ENCODE measurements at regions of chr7 and their contacts with region 1.

Region 1: GRCh38 chr7:48299580-48300169 is 128.4 kb downstream of the ABCA13 start:
- DNase-seq: peak; percentile 81
- H3K4me3 Mint-ChIP-seq: no peak overlapping the region
- H3K27ac Mint-ChIP-seq: no peak overlapping the region
- H3K4me1 Mint-ChIP-seq: peaks cover 9% of the 10 kb centered on the region
- H3K27me3 Mint-ChIP-seq: no peaks in the 10 kb centered on the region
- CTCF ChIP-seq: peak; percentile 78

Region 2: DNA sequence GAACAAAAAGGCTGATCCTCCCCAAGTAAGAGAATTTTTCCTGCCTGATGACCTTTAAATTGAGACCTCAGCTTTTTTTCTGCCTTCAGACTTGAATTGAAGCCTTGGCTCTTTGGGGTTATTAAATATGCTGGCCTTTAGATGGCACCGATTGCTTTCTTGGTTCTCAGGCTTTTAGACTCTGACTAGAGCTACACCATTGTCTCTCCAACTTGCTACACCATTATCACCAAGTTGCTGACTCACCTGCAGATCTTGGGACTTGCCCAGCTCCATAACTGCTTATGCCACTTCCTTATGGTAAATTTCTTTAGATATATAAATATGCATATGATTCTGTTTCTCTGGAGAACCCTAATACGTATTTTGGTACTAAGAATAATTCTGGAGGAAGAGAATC is 131.5 kb before region 1 on chr7:
- CTCF ChIA-PET with region 1: interaction called, 4 read pairs
- intact Hi-C with region 1: loop called (anchors 1 kb)
- DNase-seq: peak; percentile 56
- H3K4me3 Mint-ChIP-seq: no peak overlapping the region
- H3K27ac Mint-ChIP-seq: peak overlapping the region; percentile 69
- H3K4me1 Mint-ChIP-seq: peaks cover 4% of the 10 kb centered on the region
- H3K27me3 Mint-ChIP-seq: no peaks in the 10 kb centered on the region
- CTCF ChIP-seq: no peak

Region 3: DNA sequence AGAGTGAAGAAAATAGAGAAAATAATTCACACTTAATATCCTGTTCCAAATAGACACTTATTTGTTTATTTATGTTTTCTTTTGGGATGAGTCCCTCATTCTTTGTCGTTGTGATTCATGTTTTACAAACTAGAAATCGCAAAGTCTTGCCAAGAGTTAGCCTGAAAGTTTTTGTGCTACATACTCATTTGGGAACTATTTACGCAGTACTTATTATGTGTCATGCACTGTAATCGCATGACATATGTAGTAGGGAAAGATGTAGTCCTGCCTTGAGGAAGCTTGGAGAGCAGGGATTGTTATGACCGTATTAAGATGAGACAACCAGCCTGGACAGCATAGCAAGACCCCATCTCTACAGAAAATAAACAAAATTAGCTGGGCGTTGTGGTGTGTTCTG is 60.9 kb after region 1 on chr7:
- CTCF ChIA-PET with region 1: no interaction called
- intact Hi-C with region 1: no loop called
- DNase-seq: no peak
- H3K4me3 Mint-ChIP-seq: no peak overlapping the region
- H3K27ac Mint-ChIP-seq: no peak overlapping the region
- H3K4me1 Mint-ChIP-seq: no peaks in the 10 kb centered on the region
- H3K27me3 Mint-ChIP-seq: no peaks in the 10 kb centered on the region
- CTCF ChIP-seq: no peak

Region 4: GRCh38 chr7:48875045-48875916 is 575.6 kb after region 1 on chr7:
- CTCF ChIA-PET with region 1: no interaction called
- intact Hi-C with region 1: loop called (anchors 1 kb)
- DNase-seq: peak; percentile 71
- H3K4me3 Mint-ChIP-seq: no peak overlapping the region
- H3K27ac Mint-ChIP-seq: no peak overlapping the region
- H3K4me1 Mint-ChIP-seq: peaks cover 8% of the 10 kb centered on the region
- H3K27me3 Mint-ChIP-seq: no peaks in the 10 kb centered on the region
- CTCF ChIP-seq: peak; percentile 58

Region 5: GRCh38 chr7:49166441-49166840 is 866.8 kb after region 1 on chr7:
- CTCF ChIA-PET with region 1: no interaction called
- intact Hi-C with region 1: loop called (anchors 1 kb)
- DNase-seq: no peak
- H3K4me3 Mint-ChIP-seq: no peak overlapping the region
- H3K27ac Mint-ChIP-seq: no peak overlapping the region
- H3K4me1 Mint-ChIP-seq: no peaks in the 10 kb centered on the region
- H3K27me3 Mint-ChIP-seq: no peaks in the 10 kb centered on the region
- CTCF ChIP-seq: peak; percentile 10

Region 6: DNA sequence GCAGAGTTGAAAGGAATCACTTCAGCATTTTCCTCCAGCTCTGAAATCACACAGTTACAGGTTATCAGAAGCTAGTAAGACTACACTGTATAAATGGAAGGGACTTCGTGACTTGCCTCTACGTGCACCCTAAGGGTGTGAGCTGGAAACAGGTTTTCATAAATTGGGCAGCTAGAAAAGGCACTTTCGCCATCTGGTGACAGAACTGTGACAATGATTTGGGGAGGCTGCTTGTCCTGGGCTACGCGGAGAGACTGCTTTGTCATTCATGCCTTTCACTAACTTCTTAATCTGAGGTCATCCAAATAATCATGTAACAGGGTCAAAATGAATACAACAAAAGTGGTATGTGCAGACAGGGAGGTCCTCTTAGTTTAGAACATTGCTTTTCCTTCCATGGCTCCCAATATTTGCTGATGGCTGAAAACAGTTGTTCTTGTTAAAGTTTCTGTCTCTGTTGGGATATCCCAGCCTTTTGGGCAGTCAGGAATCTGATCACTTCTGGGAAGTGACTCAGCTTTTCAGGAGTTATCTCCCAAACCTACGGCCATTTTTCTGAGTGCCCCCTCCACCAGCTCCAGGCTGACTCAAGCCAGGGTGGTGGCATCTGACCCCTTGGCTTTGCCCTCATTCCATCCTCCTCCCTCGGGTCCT is 1491.5 kb after region 1 on chr7:
- CTCF ChIA-PET with region 1: interaction called, 3 read pairs
- intact Hi-C with region 1: loop called (anchors 1 kb)
- DNase-seq: peak; percentile 46
- H3K4me3 Mint-ChIP-seq: no peak overlapping the region
- H3K27ac Mint-ChIP-seq: no peak overlapping the region
- H3K4me1 Mint-ChIP-seq: no peaks in the 10 kb centered on the region
- H3K27me3 Mint-ChIP-seq: no peaks in the 10 kb centered on the region
- CTCF ChIP-seq: peak; percentile 21

Region 7: DNA sequence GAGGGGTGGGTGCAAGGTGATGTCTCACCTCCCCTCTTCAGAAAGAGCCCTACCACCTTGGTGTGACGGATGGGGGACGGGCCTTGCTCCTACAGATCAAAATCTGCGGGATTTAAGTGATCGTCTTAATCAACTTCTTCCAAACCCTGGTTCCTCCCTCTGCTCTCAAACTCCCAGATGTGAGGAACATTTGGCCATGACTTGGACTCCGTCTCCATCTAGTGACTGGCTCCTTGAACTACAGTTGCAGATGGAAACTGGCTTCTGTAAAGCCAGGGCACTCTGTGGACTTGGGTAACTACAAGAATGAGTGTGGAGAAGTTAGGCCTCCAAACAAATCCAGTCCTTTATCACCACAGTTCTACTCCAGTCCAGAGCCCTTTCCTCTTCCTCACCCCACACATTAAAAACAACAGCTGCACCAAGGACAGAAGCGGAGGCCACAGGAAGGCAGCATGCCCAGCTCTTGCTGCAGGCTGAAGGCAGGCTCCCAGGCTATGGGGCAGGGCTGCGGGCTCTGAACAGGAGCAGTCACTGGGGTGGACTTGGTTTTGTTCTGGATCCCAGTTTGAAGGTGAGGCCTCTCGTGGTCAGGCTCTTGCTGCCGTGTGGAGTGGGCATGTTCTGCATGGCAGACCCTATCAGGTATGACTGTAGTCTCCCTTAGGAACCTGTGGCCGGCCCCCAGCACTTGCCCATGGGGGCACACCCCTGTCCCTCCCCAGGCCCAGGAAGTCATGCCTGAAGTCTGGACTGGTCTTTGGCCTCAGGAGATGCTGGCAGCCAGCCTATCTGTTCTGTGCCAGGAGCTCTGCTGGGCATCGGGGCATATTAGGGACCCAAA is 1553.2 kb after region 1 on chr7:
- CTCF ChIA-PET with region 1: no interaction called
- intact Hi-C with region 1: loop called (anchors 2 kb)
- DNase-seq: peak; percentile 68
- H3K4me3 Mint-ChIP-seq: no peak overlapping the region
- H3K27ac Mint-ChIP-seq: no peak overlapping the region
- H3K4me1 Mint-ChIP-seq: peaks cover 19% of the 10 kb centered on the region
- H3K27me3 Mint-ChIP-seq: no peaks in the 10 kb centered on the region
- CTCF ChIP-seq: peak; percentile 88

Measured in Calu3 (cell line).